Posterior cingulate gyrus (tissue), 11 donors: ENCODE measurements at regions of chr5 and their contacts with region 1.

Region 1: DNA sequence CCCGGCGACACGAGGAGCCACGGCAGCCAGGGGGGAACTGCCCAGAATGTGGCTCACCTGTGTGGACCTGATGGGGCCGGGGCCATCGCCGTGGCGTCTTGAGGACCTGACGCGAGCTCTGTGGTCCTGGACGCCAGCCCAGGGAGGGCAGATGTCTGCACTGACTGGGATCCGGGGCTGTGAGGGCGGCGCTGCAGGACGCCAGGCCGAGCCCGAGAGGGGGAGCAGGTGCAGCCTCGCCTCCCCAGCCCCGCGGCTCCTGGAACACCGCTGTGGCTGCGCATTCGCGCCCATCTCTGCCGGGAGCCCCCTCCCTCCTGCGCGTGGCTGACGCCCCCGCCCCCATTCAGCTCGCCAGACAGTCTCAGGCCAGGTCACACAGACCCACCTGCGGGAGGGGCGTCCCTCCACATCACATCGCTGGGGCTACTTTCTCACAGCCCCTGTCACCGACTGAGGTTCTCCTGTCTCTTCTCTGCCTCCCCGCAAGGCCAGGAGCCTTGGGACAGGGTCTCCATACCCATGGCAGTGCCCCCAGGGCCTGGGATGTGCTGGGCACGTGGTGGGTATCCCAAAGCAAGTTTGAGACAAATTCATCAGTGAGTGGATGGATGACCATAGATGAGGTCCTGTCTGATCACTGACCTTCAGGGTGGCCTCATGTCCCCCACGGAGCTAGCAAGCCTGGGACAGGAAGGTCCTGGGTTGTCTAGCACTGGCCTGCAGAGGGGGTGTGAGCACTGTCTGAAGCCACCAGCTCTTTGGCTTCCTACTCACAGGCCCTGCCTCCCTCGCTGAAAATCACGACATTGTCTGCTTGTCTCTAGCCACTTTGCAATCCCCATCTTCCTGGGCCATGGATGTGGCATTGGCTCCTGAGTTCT is 47.3 kb downstream of the RASGEF1C start:
- DNase-seq: peak in 5 of 10 donors; percentile 36 to 95 (median 67)

Region 2: DNA sequence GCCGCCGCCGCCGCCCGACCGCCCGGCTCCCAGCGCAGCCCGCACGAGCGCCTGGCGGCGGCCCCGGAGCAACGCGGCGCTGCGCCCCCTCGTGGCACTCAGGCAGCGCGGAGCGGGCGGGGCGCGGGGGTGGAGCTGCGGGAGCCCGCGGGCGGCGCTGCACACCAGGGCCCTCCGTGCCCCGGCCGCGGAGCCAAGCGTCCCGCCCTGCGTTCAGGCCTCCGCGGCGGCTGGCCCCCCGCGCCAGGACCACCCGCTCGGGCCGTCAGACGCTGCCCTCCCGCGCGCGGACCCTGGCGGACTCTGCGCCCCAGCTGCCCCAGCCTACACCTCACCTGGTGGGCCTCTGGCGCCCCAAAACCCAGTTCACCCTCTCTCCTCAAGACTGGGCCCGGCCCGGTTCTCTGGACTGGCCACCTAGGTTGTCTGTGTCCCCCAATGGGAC is 47.5 kb after region 1 on chr5 and contains the start of gene RASGEF1C:
- intact Hi-C with region 1: loop called (anchors 1 kb)
- DNase-seq: peak in 9 of 10 donors; percentile 39 to 95 (median 66)

Region 3: DNA sequence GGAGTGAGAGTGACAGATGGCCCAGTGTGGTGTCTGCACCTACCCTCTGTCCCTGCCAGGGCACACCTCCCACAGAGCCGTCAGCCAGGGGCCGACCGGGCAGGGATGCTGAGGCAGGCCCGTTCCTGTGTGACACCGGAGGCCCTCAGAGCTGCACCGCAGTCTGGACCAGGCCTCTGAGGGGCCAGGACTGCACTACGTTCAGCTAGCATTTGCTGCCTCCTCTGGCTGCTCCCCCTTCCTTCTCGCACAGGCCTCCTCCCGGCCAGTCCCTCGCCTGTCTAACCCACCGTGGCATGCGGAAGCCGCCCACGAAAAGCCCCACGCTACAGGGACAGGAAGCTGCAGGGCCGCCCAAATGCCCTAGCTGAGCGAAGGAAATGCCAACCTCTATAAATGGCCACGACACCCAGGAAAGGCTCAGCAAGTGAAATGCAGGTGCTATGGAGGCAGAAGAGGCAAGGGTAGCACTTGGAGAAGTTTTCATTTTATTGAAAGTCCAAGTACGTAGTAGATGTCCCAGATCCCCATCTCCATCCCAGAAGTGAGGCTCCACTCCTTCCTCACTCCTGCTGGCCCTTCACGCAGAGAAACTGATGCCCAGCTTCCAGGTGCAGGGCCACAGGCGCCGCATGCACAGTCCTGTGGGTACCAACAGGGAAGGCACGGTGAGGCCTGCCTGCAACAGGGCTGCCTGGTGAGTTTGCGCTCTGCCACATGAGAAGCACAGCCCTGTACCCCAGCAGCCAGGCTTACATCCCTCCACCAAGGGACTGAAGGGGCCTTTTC is 91.6 kb after region 1 on chr5:
- intact Hi-C with region 1: no loop called
- DNase-seq: no peak